Activated naive CD4-positive, alpha-beta T cell treated with anti-CD3 and anti-CD28 coated beads for 36 hours (primary cell): ENCODE measurements at regions of chr2 and their contacts with region 1.

Region 1: GRCh38 chr2:231674587-231675338 is 33.6 kb upstream of the PTMA start:
- DNase-seq: peak; percentile 72
- H3K4me3 Mint-ChIP-seq: no peak overlapping the region
- H3K27ac Mint-ChIP-seq: no peak overlapping the region
- H3K4me1 Mint-ChIP-seq: peaks cover 8% of the 10 kb centered on the region
- H3K27me3 Mint-ChIP-seq: no peaks in the 10 kb centered on the region

Region 2: GRCh38 chr2:231648587-231649174 is 26.1 kb before region 1 on chr2:
- CTCF ChIA-PET with region 1: interaction called, 54 read pairs
- intact Hi-C with region 1: loop called (anchors 1 kb)
- DNase-seq: peak; percentile 77
- H3K4me3 Mint-ChIP-seq: no peak overlapping the region
- H3K27ac Mint-ChIP-seq: no peak overlapping the region
- H3K4me1 Mint-ChIP-seq: peaks cover 4% of the 10 kb centered on the region
- H3K27me3 Mint-ChIP-seq: no peaks in the 10 kb centered on the region

Region 3: DNA sequence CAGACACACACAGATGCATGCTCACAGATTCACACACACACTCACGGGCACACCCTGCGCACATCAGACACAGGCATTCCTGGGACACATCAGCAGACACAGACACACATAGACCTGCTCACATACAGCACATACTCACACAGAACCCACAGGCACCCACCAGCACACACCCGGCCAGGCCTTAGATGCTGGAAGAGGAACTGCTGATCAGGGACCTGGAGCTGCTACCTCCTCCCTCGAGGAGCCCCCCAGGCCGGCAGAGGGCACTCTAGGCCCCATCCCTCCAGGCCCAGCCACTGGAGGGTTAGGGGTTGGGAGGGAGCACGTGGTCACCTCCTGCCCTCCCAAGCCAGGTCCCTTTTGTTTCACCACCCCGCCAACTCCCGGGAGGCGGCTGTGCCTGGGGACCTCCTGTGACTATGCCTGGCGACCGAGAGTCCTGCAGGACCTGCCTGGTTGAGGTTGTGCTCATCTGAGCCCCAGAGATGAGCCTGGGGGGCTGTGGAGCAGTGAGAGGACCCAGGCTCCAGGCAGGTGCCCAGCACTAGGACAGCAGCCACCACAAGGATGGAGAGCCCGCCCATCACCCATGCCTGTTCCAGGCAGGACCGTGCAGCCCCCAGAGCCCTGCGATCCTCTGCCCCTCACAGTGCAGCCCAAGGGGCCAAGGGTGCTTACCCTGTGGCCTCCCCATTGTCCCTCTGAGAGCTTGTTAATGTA is 12.5 kb after region 1 on chr2:
- CTCF ChIA-PET with region 1: interaction called, 75 read pairs
- intact Hi-C with region 1: no loop called
- DNase-seq: peak; percentile 72
- H3K4me3 Mint-ChIP-seq: no peak overlapping the region
- H3K27ac Mint-ChIP-seq: no peak overlapping the region
- H3K4me1 Mint-ChIP-seq: peaks cover 6% of the 10 kb centered on the region
- H3K27me3 Mint-ChIP-seq: peaks cover 6% of the 10 kb centered on the region

Region 4: DNA sequence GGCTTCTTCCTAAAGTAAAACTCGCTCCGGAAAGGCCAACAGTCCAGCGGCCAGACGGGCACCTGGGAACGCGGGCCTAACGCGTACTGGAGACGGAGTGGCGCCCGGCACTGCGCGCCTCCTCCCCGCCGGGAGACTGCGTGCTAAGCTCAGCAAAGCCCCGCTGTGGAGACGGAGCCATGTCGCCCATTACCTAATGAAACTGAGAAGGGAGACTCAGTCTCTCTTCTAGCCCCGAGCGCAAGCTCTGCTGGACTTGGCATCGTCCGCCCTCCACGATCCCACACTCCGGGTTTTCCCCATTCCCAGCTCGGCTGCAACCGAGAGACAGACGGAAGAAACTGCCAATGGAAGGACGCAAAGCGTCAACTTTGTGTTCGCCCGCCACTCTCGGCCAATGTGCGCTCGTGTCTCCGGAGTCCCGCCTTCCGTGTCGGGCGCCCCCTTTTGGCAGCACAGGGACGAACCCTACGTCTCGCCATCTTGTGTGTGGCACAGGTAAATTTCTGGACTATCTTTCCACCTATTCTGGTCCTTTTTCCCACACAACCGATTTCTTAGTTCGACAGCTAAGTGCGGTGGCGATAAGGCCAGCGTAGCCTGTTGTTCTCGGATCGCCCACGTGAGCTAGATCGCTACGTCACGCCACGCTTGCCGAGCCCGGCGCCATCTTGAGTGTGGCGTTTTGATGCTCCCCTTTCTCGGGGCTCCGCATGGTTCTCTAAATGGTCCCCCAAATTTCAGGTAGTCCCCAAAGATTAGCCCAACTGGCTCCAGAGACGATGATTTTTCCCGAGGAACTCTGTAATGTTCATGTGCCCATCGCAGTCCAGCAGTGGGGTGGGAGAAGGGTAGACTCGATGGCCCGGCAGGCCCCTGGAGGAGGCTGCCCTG is 32.2 kb after region 1 on chr2:
- CTCF ChIA-PET with region 1: interaction called, 408 read pairs
- intact Hi-C with region 1: no loop called
- DNase-seq: peak; percentile 98
- H3K4me3 Mint-ChIP-seq: peak overlapping the region; percentile 91
- H3K27ac Mint-ChIP-seq: peak overlapping the region; percentile 100
- H3K4me1 Mint-ChIP-seq: peaks cover 18% of the 10 kb centered on the region
- H3K27me3 Mint-ChIP-seq: peaks cover 2% of the 10 kb centered on the region

Region 5: GRCh38 chr2:231726228-231726627 is 51.5 kb after region 1 on chr2:
- CTCF ChIA-PET with region 1: interaction called, 408 read pairs
- intact Hi-C with region 1: no loop called
- DNase-seq: no peak
- H3K4me3 Mint-ChIP-seq: no peak overlapping the region
- H3K27ac Mint-ChIP-seq: no peak overlapping the region
- H3K4me1 Mint-ChIP-seq: no peaks in the 10 kb centered on the region
- H3K27me3 Mint-ChIP-seq: no peaks in the 10 kb centered on the region